ENCODE measurements at regions of chr22 and their contacts with region 1.

Region 1: DNA sequence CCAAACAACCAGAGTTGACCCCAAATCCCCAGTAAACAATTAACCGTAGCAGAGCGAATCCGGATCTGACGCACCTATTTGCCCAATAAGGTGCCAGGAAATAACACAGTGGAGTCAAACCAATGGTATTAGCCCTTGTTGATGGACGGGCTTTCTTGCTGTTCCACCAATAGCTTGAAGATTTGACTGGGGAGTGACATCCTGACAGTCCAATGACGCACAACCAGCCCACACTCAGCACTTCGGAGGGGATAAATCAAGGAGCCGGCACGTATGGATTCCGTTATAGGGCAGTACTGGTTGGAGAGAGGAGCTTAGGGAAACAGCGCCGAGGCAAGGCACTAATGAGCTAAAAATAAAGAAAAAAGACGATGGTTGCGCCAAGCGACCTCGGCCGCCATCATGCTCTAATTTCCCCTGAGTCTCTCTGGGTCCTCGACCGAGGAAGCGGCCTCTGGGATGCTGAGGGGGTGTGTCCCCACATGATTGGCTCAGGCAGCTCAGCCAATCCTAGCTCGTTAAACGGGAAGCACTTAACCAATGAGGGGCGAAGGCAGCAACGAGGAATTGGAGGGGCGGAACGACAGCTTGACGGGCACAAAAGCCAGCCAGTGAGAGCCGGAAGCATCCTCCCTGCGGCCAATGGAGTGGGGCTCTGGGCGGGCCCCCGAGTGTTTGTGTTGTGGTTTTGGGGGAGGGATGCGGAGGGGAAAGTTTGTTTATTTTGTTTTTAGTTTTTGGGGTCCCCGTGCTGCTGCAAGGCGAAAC is 49.5 kb downstream of the FAM83F start:
- DNase-seq: peak; percentile 98
- ATAC-seq: peak; percentile 97
- H3K4me3 ChIP-seq: peak overlapping the region; percentile 93
- H3K27ac ChIP-seq: peak overlapping the region; percentile 89 to 93
- H3K4me1 ChIP-seq: peaks cover 0 to 2% of the 10 kb centered on the region in 2 donors
- H3K27me3 ChIP-seq: no peaks in the 10 kb centered on the region

Region 2: GRCh38 chr22:40177738-40178416 is 133.6 kb after region 1 on chr22 and contains the start of gene TNRC6B:
- intact Hi-C with region 1: loop called in 1 of 2 experiments (anchors 1 kb)
- DNase-seq: peak in 1 of 2 donors; percentile 79
- ATAC-seq: peak; percentile 96
- H3K4me3 ChIP-seq: peak within 1 kb of the TSS; percentile 89 to 98
- H3K27ac ChIP-seq: peak within 1 kb of the TSS; percentile 24 to 84
- H3K4me1 ChIP-seq: peaks cover under 1 to 9% of the 10 kb centered on the region in 2 donors
- H3K27me3 ChIP-seq: no peaks in the 10 kb centered on the region
- total RNA-seq, gene TNRC6B: 81.8 to 85.0 TPM

Region 3: DNA sequence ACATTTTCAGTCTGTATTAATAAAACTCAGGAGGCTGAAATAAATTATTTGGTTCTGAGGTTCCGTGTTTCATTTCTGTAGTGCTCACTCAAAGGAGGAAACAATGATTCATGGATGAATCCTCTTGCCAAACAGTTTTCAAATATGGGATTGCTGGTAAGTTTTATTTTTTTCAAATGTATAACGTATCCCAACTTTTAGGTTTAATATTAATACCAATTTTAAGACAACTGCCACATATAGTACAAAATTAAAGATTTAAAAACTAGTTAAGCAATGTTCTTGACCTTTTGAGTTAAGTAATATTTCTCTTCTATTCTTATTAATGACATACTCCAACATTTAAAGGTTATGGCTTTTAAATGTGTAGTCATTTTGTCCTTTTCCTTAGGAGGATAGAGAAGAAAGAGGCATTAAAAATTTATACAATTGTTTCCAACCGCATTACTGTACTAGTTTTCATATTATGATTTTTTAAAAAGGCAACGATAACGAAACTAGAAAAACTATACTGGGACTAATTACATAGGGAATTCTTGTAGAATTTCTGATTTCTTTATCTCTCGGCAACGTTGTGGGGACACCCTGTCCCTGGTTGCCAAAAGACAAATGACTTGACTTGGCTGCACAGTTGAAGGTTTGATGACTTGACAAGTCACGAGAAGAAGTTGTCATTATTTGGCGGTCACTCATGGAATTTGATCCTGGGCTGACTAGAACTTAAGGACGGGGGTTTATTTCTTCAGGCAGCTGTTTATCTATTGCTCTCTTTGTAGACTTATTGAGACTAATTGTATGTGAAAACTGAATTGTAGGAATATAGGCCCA is 232.9 kb after region 1 on chr22:
- intact Hi-C with region 1: loop called (anchors 5 to 10 kb)
- DNase-seq: no peak
- ATAC-seq: peak; percentile 65
- H3K4me3 ChIP-seq: peak overlapping the region in 1 of 2 donors; percentile 50
- H3K27ac ChIP-seq: peak overlapping the region in 1 of 2 donors; percentile 55
- H3K4me1 ChIP-seq: peaks cover 3% of the 10 kb centered on the region in 2 donors
- H3K27me3 ChIP-seq: no peaks in the 10 kb centered on the region

Region 4: GRCh38 chr22:40346178-40347118 is 302.2 kb after region 1 on chr22 and contains the start of gene ADSL:
- intact Hi-C with region 1: loop called (anchors 2 to 10 kb)
- DNase-seq: peak; percentile 93 to 97
- ATAC-seq: peak; percentile 98
- H3K4me3 ChIP-seq: peak within 1 kb of the TSS; percentile 34 to 42
- H3K27ac ChIP-seq: peak within 1 kb of the TSS; percentile 6 to 35
- H3K4me1 ChIP-seq: peaks cover 3% of the 10 kb centered on the region in 2 donors
- H3K27me3 ChIP-seq: no peaks in the 10 kb centered on the region
- total RNA-seq, gene ADSL: 40.5 to 49.0 TPM